IMR-90 (cell line): ENCODE measurements at regions of chr18 and their contacts with region 1.

Region 1: DNA sequence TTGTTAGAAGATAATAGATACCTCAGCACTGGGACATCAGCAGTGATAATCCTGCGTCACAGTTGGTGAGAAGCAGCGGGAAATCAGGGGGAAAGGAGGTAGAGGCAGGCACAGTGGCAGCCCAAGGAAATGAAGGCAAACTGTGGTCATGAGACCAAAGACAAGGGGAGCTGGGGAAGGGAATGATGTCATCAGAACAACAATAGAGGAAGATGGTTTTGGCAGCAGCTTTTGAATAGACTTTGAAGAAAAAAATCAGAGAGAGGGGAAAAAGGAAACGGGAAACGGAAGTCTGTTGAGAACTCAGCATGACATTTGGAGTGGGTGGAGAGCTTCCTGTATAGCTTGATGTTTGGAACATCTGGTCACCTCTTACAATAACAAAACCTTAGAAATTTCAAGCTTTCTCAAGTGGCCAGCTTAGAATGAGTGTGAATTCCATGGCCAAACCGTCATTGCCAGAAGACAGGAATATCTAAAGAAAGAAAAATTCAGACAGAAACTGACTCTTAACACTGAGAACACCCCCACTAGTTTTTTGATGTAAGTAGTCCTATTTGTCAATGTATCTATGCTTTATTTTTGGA is 18.4 kb upstream of the YES1 start:
- DNase-seq: peak; percentile 67
- ATAC-seq: peak; percentile 51
- H3K4me3 ChIP-seq: no peak overlapping the region
- H3K27ac ChIP-seq: no peak overlapping the region
- H3K4me1 ChIP-seq: peaks cover 5% of the 10 kb centered on the region
- H3K27me3 ChIP-seq: peaks cover 18% of the 10 kb centered on the region
- CTCF ChIP-seq: no peak
- POLR2A ChIP-seq: no peak
- RAD21 ChIP-seq: no peak

Region 2: DNA sequence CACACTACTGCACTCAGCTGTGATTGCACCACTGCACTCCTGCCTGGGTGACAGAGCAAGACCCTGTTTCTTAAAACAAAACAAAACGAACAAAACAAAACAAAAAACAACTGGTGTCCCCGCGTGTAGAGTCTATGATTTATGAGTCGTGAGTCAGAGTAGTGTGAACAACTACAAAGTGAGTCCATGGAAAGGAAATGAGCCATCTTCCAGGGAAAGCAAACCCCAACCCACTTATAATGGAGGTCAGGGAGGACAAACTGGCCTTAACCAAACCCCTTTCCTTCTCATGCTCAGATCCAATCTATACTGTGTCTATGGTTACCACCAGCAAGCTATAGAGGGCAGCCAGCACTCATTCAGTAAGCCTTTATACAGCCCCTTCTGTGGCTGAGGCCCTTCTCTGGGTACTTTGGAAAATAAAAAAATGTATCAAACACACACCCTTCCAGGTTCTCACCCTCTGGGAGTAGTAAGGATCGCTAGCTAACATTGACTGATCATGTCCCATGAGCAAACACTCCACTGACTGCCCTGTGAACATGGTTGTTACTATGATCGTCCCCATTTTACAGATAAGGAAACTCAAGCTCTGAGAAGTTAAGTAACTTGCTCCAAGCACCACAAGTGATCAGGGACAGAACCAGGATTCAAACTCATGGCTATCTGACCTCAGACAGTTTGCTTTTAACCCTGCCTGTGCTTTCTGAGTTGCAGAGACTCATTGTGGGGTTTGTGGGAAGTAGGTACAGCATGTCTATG is 305.2 kb before region 1 on chr18:
- CTCF ChIA-PET with region 1: no interaction called
- POLR2A ChIA-PET with region 1: no interaction called
- dilution Hi-C with region 1: no loop called
- in situ Hi-C with region 1: no loop called
- intact Hi-C with region 1: no loop called
- DNase-seq: peak; percentile 81
- ATAC-seq: peak; percentile 56
- H3K4me3 ChIP-seq: no peak overlapping the region
- H3K27ac ChIP-seq: no peak overlapping the region
- H3K4me1 ChIP-seq: peaks cover 8% of the 10 kb centered on the region
- H3K27me3 ChIP-seq: peaks cover 4% of the 10 kb centered on the region; the same call in 1 of the 2 replicates
- CTCF ChIP-seq: no peak
- POLR2A ChIP-seq: no peak
- RAD21 ChIP-seq: no peak

Region 3: DNA sequence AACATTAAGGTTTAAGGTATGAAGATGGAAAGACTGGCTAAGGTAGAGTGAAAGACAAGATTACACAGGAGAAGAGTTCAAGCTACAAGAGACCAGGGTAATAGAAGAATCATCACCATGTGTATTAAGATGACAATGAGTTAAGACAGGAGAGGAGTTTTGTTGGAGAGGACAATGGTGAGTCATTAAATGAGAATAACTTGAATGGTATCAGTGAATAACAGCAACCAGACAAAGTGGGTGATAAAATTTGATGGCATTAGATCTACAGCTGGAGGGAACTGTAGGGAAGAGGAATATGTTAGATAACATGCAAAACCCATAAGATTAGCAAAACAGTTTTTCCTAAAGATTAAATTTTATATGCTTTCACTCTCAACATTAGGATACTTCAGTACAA is 99.2 kb before region 1 on chr18:
- CTCF ChIA-PET with region 1: interaction called, 45 read pairs
- POLR2A ChIA-PET with region 1: no interaction called
- dilution Hi-C with region 1: no loop called
- in situ Hi-C with region 1: loop called (anchors 5 kb)
- intact Hi-C with region 1: no loop called
- DNase-seq: peak; percentile 13
- ATAC-seq: no peak
- H3K4me3 ChIP-seq: no peak overlapping the region
- H3K27ac ChIP-seq: no peak overlapping the region
- H3K4me1 ChIP-seq: no peaks in the 10 kb centered on the region
- H3K27me3 ChIP-seq: no peaks in the 10 kb centered on the region
- CTCF ChIP-seq: no peak
- POLR2A ChIP-seq: no peak
- RAD21 ChIP-seq: no peak

Region 4: GRCh38 chr18:741931-742512 is 88.4 kb before region 1 on chr18:
- CTCF ChIA-PET with region 1: interaction called, 45 read pairs
- POLR2A ChIA-PET with region 1: interaction called, 3 read pairs
- dilution Hi-C with region 1: no loop called
- in situ Hi-C with region 1: no loop called
- intact Hi-C with region 1: loop called (anchors 1 kb)
- DNase-seq: peak; percentile 63
- ATAC-seq: peak; percentile 83
- H3K4me3 ChIP-seq: no peak overlapping the region
- H3K27ac ChIP-seq: no peak overlapping the region
- H3K4me1 ChIP-seq: no peaks in the 10 kb centered on the region
- H3K27me3 ChIP-seq: no peaks in the 10 kb centered on the region
- CTCF ChIP-seq: peak; percentile 77
- POLR2A ChIP-seq: no peak
- RAD21 ChIP-seq: peak; percentile 83

Region 5: DNA sequence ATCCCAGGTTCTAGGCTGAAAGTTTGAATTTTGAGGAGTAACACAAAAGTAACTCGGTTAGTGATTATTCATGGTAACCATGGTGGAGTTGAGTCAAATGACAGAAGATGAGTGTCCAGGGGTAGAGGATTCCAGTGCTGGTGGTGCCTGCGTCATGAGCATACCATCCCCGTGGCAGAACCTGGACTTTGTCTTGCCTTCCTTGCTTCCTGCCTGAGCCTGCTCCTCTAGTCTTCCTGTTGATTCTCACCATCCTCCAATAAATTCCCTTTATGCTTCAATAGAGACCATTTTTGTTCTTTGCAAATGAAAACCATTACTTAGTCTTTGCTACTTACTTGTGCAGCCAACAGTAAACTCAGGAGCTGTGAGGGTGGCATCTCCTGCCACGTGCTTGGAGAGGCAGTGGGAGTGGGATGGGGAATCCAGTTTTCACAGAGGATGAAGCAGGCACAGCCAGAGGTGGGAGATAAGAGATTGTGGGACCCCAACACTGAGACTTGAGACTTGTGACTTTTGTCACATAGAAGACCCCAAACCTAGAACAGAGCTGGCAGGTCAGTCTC is 14.2 kb before region 1 on chr18:
- CTCF ChIA-PET with region 1: interaction called, 11 read pairs
- POLR2A ChIA-PET with region 1: no interaction called
- dilution Hi-C with region 1: no loop called
- in situ Hi-C with region 1: no loop called
- intact Hi-C with region 1: no loop called
- DNase-seq: no peak
- ATAC-seq: no peak
- H3K4me3 ChIP-seq: no peak overlapping the region
- H3K27ac ChIP-seq: no peak overlapping the region
- H3K4me1 ChIP-seq: peaks cover 1% of the 10 kb centered on the region; the same call in 1 of the 2 replicates
- H3K27me3 ChIP-seq: no peaks in the 10 kb centered on the region
- CTCF ChIP-seq: no peak
- POLR2A ChIP-seq: no peak
- RAD21 ChIP-seq: no peak